HEK293 (cell line): ENCODE measurements at regions of chr19 and their contacts with region 1.

Region 1: DNA sequence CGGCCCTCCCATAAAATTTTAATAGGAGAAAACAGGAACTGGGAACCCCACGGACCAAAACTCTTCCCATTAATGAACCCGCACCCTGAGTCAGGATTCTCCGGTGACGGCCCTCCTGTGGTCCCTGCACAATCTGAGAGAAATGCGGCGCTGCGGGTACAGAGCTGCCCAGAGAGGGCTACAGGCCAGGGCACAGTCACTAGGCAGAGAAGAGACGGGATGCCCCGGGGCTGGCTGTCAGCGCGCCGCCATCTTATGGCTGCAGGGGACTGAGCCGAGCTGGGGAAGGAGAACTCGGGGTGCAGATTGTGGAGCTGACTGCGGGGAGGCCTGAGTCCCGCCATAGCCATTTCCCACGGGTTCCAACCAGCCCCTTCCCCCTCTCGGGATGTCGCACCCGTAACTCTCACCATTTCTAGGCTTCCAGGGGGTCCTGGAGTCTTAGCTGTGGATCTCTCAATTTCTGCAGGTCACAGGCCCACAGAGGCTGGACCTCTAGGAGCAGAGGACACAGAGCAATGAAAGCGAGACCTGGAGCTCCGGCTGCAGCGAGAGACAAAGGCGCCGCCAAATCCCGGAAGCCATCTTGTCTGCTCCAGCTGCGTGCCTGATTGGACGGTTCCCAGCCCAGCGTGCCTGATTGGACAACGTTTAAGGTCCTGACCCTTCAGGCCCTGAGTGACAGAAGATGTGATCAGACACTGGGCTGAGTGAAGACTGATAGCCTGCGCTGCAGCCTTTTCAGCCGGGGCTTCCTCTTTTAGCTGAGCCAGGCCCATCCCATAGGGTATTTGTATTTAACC is at the start of gene ZNF675:
- H3K4me3 ChIP-seq: peak within 1 kb of the TSS; percentile 66
- H3K27ac ChIP-seq: peak within 1 kb of the TSS; percentile 88
- H3K4me1 ChIP-seq: no peaks in the 10 kb centered on the region
- CTCF ChIP-seq: no peak

Region 2: DNA sequence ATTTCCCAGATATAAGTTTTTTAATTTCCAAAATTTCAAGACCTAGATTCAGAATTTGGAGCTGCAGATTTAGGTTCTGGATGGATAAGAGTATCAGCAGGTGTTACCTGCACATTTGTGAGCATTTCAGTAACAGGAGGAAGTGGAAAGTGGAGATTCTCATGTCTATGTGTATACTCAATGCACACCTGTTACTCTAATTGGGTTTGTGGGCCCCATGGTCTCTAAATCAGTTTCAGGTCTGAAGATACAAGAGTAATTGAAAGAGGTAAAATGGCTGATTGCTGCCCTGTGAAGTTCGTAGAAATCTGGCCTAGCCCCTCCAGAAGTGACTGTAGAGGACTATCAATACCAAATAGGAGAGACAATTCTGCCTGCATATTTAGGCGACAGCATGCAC is 13.7 kb before region 1 on chr19:
- CTCF ChIA-PET with region 1: no interaction called
- POLR2A ChIA-PET with region 1: interaction called, 13 read pairs
- H3K4me3 ChIP-seq: no peak overlapping the region
- H3K27ac ChIP-seq: no peak overlapping the region
- H3K4me1 ChIP-seq: no peaks in the 10 kb centered on the region
- CTCF ChIP-seq: no peak

Region 3: GRCh38 chr19:23699082-23699761 is 12.4 kb after region 1 on chr19:
- CTCF ChIA-PET with region 1: no interaction called
- POLR2A ChIA-PET with region 1: interaction called, 11 read pairs
- H3K4me3 ChIP-seq: peak overlapping the region; percentile 6; the same call in 1 of the 2 replicates
- H3K27ac ChIP-seq: no peak overlapping the region
- H3K4me1 ChIP-seq: no peaks in the 10 kb centered on the region
- CTCF ChIP-seq: no peak

Region 4: DNA sequence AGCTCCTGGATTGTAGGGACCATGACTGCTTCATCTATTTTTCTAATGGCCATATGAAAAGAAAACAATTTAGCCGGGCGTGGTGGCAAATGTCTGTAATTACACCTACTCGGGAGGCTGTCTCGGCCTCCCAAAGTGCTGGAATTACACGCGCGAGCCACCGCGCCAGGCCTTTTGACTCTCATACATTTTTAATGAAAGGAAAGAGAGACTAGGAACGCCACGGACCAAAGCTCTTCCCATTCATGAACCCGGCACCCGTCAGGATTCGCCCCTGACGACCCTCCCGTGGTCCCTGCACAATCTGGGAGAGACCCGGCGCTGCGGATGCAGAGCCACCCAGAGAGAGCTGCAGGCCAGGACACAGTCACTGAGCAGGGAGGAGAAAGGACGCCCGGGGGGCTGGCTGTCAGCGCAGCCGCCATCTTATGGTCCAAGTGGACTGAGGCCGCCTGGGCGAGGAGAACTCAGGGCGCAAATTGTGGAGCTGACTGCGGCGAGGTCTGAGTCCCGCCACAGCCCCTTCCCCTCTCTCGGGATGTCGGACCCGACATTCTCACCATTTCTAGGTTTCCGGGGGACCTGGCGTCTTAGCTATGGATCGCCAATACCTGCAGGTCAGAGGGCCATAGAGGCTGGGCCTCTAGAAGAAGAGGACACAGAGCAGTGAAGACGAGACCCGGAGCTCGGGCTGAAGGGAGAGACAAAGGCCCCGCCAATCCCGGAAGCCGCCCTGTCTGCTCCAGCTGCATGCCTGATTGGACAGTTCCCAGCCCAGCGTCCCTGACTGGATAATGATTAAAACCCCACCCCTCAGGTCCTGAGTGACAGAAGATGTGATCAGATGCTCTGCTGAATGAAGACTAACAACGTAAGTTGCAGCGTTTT is 71.6 kb after region 1 on chr19 and contains the start of gene ZNF681:
- CTCF ChIA-PET with region 1: no interaction called
- POLR2A ChIA-PET with region 1: interaction called, 12 read pairs
- H3K4me3 ChIP-seq: peak within 1 kb of the TSS; percentile 74
- H3K27ac ChIP-seq: no peak within 1 kb of the TSS
- H3K4me1 ChIP-seq: no peaks in the 10 kb centered on the region
- CTCF ChIP-seq: no peak

Region 5: DNA sequence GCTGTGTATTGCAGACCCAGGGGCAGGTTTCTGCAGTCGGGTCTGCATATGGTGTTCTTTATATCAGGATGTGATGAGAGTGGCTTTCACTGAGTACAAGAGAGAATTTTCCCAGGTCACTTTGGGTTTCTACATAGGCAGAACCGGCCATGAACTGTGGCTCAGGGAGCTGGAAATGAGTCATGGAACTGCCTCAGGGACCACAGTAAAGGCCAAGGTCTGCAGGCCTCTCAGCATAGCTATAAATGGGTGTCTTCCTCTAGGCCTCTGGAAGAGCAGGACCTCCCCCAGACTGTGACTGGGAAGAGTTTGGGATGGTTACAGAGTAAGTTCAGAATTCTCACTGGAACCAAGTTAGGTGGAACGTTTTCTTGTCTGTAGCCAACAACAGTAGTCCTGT is 123.7 kb after region 1 on chr19:
- CTCF ChIA-PET with region 1: no interaction called
- POLR2A ChIA-PET with region 1: no interaction called
- H3K4me3 ChIP-seq: no peak overlapping the region
- H3K27ac ChIP-seq: no peak overlapping the region
- H3K4me1 ChIP-seq: no peaks in the 10 kb centered on the region
- CTCF ChIP-seq: no peak